Activated B cell treated with CpG ODN at 0.5 μM for 24 hours (primary cell): ENCODE measurements at regions of chr6 and their contacts with region 1.

Region 1: GRCh38 chr6:88238065-88238464 is 71.9 kb upstream of the CNR1 start:
- DNase-seq: no peak
- ATAC-seq: peak; percentile 82
- H3K4me3 Mint-ChIP-seq: no peak overlapping the region
- H3K27ac Mint-ChIP-seq: no peak overlapping the region
- H3K4me1 Mint-ChIP-seq: peaks cover 5% of the 10 kb centered on the region
- H3K27me3 Mint-ChIP-seq: no peaks in the 10 kb centered on the region
- CTCF ChIP-seq: no peak

Region 2: DNA sequence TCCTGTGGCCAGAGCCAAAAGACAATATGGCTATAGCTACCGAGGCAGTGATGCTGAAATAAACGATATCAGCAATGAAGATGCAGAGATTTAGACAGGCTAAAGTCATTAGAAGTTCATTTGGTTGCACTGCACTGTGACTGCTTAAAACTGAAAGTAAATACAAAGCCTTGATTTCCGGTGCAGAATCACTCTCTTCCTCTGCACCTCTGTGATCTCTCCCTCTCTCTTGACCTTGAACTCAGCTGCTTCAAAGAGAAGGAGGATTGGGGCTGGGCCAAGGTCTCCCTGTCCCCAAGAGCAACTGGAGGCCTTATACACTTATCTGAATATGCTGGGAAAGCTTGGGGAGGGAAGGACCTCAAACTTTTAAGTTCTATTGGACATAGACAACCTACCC is 225.1 kb before region 1 on chr6:
- CTCF ChIA-PET with region 1: no interaction called
- POLR2A ChIA-PET with region 1: no interaction called
- intact Hi-C with region 1: loop called (anchors 5 kb)
- DNase-seq: no peak
- ATAC-seq: peak; percentile 52
- H3K4me3 Mint-ChIP-seq: no peak overlapping the region
- H3K27ac Mint-ChIP-seq: peak overlapping the region; percentile 64
- H3K4me1 Mint-ChIP-seq: peaks cover 16% of the 10 kb centered on the region
- H3K27me3 Mint-ChIP-seq: no peaks in the 10 kb centered on the region
- CTCF ChIP-seq: no peak

Region 3: DNA sequence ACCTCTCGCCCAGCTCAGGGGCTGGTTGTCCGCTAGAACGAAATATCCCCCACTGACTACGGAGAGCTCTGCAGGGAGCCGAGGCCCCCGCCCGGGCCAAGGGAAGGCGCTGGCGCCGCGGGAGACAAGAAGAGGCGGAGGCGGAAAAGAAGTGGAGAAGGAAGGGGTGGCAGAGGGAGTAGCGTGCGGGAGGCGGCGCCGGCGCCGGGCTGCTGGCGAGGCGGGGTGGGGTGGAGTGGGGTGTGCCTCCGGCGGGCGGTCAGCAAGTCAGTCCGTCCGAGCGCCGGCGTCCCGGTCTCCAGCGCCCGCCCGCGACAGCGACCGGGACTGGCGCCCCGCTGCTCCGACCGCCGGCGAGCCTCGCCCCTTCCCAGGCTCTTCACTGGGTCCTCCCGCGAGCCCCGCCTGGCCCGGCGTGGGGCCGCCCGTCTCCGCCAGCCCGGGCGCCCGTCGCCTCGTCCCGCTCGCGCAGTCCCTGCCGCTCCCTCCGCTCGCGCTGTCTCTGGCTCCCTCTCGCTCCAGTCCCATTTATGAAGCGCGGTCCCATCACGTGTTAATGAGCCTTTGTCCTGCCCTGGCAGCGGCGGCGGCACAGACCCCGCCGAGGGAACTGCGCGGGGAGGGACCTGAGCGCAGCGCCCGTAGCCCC is 72.1 kb before region 1 on chr6 and contains the start of gene CNR1:
- CTCF ChIA-PET with region 1: interaction called, 5 read pairs
- POLR2A ChIA-PET with region 1: interaction called, 3 read pairs
- intact Hi-C with region 1: loop called (anchors 1 kb)
- DNase-seq: no peak
- ATAC-seq: peak; percentile 59
- H3K4me3 Mint-ChIP-seq: peak within 1 kb of the TSS; percentile 91
- H3K27ac Mint-ChIP-seq: peak within 1 kb of the TSS; percentile 87
- H3K4me1 Mint-ChIP-seq: peaks cover 34% of the 10 kb centered on the region
- H3K27me3 Mint-ChIP-seq: peaks cover 15% of the 10 kb centered on the region
- CTCF ChIP-seq: no peak
- total RNA-seq, gene CNR1: 2.7 and 4.4 TPM in 2 replicates

Region 4: DNA sequence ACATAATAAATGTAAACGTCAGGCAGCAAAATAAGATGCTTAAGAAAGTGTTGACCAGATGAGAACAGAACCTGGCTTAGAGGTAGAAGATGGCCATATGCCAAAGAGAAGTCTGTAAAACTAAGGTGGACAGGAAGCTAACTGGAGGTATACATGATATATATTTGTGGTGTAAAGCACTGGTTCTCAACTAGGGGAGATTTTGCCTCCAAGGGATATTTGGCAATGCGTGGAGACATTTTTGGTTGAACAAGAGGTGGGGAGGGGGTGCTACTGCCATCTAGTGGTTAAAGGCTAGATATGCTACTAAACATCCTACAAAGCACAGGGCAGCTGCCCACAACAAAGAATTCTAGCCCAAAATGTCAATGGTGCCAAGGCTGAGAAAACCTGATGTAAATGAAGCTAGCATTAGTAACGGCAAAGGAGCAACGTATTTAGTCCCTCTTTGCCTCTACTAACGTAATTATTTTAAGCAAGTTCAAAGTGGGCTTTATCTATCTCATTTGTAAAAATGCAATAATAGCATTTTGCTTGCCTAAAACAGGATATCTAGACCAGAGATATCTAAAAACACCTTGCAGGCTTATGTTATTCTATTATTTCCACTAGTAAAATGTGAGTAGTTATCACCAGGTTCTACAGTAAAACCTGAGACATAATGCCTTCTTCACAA is 542.8 kb after region 1 on chr6:
- CTCF ChIA-PET with region 1: interaction called, 10 read pairs
- POLR2A ChIA-PET with region 1: no interaction called
- intact Hi-C with region 1: loop called (anchors 2 kb)
- DNase-seq: no peak
- ATAC-seq: peak; percentile 83
- H3K4me3 Mint-ChIP-seq: no peak overlapping the region
- H3K27ac Mint-ChIP-seq: no peak overlapping the region
- H3K4me1 Mint-ChIP-seq: peaks cover 16% of the 10 kb centered on the region
- H3K27me3 Mint-ChIP-seq: no peaks in the 10 kb centered on the region
- CTCF ChIP-seq: no peak